PC-3 (cell line): ENCODE measurements at regions of chr1 and their contacts with region 1.

Region 1: DNA sequence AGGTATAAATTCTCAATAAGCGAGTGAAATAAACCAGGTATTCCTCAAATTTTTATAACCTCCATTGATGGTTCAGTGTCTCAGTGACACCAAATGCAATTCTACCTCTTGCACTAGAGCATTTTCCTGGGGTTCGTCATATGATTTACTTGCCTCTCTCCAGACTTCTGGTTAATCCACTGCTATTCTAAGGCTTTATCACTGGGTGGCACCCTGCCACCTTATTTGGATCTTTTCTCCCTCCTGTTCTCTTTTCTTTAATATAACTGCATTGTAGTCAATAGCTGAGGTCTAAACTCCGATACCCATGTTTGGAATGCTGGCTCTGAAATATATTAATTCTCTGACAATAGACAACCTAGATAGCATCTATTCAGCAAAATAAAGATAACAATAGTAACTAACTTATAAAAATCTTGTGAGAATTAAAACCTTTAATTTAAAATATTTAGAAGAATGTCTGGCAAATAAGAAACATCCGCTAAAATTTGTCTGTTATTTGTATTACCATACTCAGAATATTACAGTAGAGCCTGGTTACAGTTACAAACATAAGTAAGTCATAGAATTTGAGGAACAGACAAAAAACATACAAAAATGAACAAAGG is 436.4 kb downstream of the PLA2G4A start:
- DNase-seq: peak; percentile 68
- ATAC-seq: peak; percentile 76
- H3K4me3 ChIP-seq: no peak overlapping the region
- H3K27ac ChIP-seq: no peak overlapping the region
- H3K4me1 ChIP-seq: no peaks in the 10 kb centered on the region
- H3K27me3 ChIP-seq: no peaks in the 10 kb centered on the region
- CTCF ChIP-seq: peak; percentile 66

Region 2: DNA sequence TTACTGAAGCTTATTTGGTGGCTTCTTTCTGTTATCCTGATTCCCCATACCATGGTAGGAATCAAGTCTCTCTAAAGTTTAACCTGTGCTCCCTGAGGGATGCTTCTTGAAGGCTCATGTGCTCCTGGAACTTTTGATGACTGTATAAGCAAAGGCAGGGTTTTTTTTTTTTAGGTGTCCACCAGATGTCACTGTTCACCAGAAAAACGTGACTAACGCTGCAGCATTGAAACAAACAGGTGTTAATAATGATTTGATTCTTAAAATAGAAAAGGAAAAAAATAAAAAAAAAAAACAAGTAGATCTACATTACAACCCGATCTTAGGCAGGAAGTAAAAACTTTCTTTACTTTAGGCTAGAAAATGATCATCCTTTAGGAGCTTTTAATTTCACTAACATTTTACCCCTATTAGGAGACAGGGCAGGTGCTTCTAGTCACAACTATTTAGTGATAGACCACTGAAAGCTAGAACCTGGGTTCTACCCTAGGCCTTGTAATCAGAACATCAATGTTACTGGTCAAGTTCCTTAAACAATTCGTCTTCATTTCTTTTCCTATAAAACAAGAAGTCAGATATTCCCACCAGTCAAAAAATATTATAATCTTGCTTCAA is 213.4 kb before region 1 on chr1:
- CTCF ChIA-PET with region 1: no interaction called
- POLR2A ChIA-PET with region 1: no interaction called
- intact Hi-C with region 1: loop called (anchors 2 kb)
- DNase-seq: peak; percentile 51
- ATAC-seq: no peak
- H3K4me3 ChIP-seq: no peak overlapping the region
- H3K27ac ChIP-seq: no peak overlapping the region
- H3K4me1 ChIP-seq: peaks cover 4% of the 10 kb centered on the region; the same call in 1 of the 2 replicates
- H3K27me3 ChIP-seq: no peaks in the 10 kb centered on the region
- CTCF ChIP-seq: peak; percentile 68

Region 3: GRCh38 chr1:187408212-187409003 is 143.3 kb after region 1 on chr1:
- CTCF ChIA-PET with region 1: no interaction called
- POLR2A ChIA-PET with region 1: no interaction called
- intact Hi-C with region 1: loop called (anchors 1 kb)
- DNase-seq: no peak
- ATAC-seq: no peak
- H3K4me3 ChIP-seq: no peak overlapping the region
- H3K27ac ChIP-seq: no peak overlapping the region
- H3K4me1 ChIP-seq: no peaks in the 10 kb centered on the region
- H3K27me3 ChIP-seq: no peaks in the 10 kb centered on the region
- CTCF ChIP-seq: no peak

Region 4: GRCh38 chr1:187491082-187491720 is 226.1 kb after region 1 on chr1:
- CTCF ChIA-PET with region 1: no interaction called
- POLR2A ChIA-PET with region 1: no interaction called
- intact Hi-C with region 1: no loop called
- DNase-seq: peak; percentile 70
- ATAC-seq: peak; percentile 80
- H3K4me3 ChIP-seq: no peak overlapping the region
- H3K27ac ChIP-seq: peak overlapping the region; percentile 61
- H3K4me1 ChIP-seq: peaks cover 17% of the 10 kb centered on the region
- H3K27me3 ChIP-seq: no peaks in the 10 kb centered on the region
- CTCF ChIP-seq: no peak

Region 5: GRCh38 chr1:187999973-188000372 is 734.9 kb after region 1 on chr1:
- CTCF ChIA-PET with region 1: no interaction called
- POLR2A ChIA-PET with region 1: no interaction called
- intact Hi-C with region 1: loop called (anchors 10 kb)
- DNase-seq: peak; percentile 11
- ATAC-seq: peak; percentile 40; the same call in 1 of the 2 replicates
- H3K4me3 ChIP-seq: no peak overlapping the region
- H3K27ac ChIP-seq: no peak overlapping the region
- H3K4me1 ChIP-seq: no peaks in the 10 kb centered on the region
- H3K27me3 ChIP-seq: no peaks in the 10 kb centered on the region
- CTCF ChIP-seq: peak; percentile 39; the same call in 1 of the 2 replicates

Region 6: DNA sequence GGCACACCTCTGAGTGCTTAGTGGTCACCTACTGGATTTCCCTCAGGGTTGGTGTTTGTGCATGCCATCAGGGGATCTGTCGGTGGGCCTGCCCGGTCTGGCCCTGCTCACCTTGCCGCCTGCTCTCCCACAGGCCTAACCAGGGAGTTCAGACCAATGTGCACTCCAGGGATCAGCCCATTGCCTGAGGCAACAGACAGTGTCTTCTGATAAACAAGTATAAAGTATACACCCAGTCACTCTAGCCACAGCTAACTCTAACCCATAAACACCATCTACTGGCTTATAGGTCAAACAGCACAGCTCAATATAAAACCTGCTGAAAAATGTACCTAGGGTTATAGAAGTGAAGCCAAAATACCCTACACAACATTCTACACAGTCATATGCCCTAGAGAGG is 863.7 kb after region 1 on chr1:
- CTCF ChIA-PET with region 1: no interaction called
- POLR2A ChIA-PET with region 1: no interaction called
- intact Hi-C with region 1: loop called (anchors 1 kb)
- DNase-seq: peak; percentile 59
- ATAC-seq: peak; percentile 87
- H3K4me3 ChIP-seq: no peak overlapping the region
- H3K27ac ChIP-seq: no peak overlapping the region
- H3K4me1 ChIP-seq: peaks cover 18% of the 10 kb centered on the region
- H3K27me3 ChIP-seq: no peaks in the 10 kb centered on the region
- CTCF ChIP-seq: peak; percentile 61